ENCODE measurements at regions of chr12 and their contacts with region 1.

Region 1: DNA sequence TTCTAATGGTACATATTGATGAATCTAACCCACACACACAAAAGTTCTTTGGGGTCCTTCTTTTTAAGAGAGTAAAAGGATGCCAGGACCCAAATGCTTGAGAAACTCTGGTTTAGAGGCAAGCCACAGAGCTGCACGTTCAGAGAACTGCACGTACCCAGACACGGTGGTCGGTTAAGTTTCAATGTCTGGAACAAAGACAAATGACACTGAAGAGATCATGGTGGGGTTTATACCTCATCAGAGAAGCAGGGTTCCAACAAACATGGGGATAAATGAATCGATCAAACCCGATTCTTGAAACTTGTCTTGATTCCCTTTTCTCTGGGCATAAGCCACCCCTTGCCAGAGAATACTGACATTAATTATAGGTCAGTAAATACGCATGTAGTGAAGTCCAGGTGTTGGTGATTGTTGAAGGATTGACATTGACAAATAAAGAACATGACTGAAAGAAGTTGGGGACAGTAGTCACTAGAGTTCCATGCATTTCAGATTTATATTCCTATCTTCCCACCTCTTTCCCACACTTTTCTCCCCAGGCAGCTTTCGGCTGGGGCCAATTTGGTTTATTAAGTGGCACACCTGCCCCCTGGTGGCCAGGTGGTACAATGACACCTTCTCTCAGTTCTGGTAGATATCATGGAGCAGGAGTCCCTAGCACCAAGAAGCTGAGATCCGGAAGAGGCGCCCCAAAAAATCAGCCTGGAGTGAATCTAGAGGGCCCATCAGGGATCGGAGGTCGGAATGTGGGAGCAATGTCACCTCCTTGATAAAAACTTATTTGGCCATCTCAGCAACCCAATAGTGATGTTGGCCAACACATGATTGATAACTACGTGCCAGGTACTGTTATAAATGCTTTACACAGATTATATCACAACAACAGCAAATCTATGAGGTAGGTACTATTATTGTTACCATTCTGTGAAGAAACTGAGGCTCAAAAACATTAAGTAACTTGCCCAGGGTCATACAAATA is 17.8 kb upstream of the HDAC7 start:
- DNase-seq: peak; percentile 74
- ATAC-seq: peak; percentile 86

Region 2: GRCh38 chr12:47715393-47715876 is 122.0 kb before region 1 on chr12:
- intact Hi-C with region 1: loop called (anchors 2 kb)
- DNase-seq: peak; percentile 77
- ATAC-seq: peak; percentile 60

Region 3: GRCh38 chr12:47779301-47779942 is 58.1 kb before region 1 on chr12:
- intact Hi-C with region 1: loop called (anchors 10 kb)
- DNase-seq: peak; percentile 91
- ATAC-seq: peak; percentile 73

Region 4: GRCh38 chr12:47802324-47802735 is 35.2 kb before region 1 on chr12:
- intact Hi-C with region 1: loop called (anchors 5 kb)
- DNase-seq: no peak
- ATAC-seq: no peak

Measured in left ventricle myocardium superior (tissue), 1 donor.